ENCODE measurements at regions of chr2 and their contacts with region 1.

Region 1: DNA sequence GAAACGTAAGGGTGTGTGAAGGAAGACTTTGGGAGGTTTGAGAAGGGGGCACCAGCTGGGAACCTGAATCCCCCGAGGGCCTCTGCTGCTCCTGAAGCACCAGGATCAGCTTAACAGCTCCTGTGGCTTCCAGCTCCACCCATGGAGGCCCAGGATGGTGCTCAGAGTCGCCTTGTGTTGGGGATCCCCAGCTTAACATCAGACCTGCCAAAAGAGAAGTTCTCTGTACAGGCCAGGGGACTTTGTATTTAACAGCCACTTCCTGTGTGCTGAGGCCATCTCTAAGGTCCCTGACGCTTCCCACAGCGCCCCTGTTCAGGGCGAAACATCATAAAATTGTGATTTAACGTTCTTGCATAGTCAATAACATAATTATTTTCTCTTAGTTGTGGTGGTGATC is 77.5 kb downstream of the NCK2 start:
- DNase-seq: no peak
- ATAC-seq: no peak

Region 2: GRCh38 chr2:105744091-105744908 is 77.9 kb before region 1 on chr2:
- intact Hi-C with region 1: no loop called
- DNase-seq: peak; percentile 90
- ATAC-seq: peak; percentile 93

Region 3: GRCh38 chr2:105797298-105797819 is 24.8 kb before region 1 on chr2:
- intact Hi-C with region 1: no loop called
- DNase-seq: no peak
- ATAC-seq: peak; percentile 54

Region 4: DNA sequence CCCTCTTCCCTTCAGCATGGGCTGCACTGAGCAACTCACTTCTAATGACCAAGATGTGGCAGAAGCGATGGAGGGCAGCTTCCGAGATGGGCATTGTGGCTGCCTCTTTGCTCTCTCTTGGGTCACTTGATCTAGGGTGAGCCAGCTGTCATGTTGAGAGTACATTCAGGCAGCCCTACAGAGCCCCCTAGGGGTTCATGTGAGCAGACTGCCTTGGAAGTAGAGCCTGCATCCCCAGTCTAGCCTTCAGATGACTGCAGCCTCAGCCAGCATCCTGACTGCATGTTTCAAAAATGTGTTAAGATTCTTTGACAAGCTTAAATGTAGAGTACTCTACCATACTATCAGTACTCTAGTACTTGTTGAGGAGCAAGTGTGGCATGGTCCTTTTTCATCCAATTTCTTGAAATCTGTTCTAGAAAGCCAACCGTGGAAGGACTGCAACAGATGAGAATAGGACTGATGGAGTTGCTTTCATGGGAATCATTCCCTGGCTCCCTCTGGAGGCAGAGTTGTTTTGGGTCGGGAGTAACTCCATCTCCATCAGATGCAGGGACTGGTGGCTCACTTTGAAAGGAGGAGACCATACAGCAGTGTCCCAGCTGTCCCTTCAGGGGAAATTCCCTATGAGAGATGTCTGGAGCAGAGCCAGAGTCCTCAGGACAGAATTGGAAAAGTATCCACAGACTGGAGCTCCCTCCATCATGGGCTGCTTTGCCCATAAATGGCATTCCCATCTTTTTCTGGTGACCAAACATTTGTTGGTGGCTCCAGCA is 66.6 kb after region 1 on chr2:
- intact Hi-C with region 1: loop called (anchors 5 kb)
- DNase-seq: no peak
- ATAC-seq: peak; percentile 21

Measured in Right ventricle myocardium inferior (tissue), 1 donor.